ENCODE measurements at regions of chr1 and their contacts with region 1.

Region 1: DNA sequence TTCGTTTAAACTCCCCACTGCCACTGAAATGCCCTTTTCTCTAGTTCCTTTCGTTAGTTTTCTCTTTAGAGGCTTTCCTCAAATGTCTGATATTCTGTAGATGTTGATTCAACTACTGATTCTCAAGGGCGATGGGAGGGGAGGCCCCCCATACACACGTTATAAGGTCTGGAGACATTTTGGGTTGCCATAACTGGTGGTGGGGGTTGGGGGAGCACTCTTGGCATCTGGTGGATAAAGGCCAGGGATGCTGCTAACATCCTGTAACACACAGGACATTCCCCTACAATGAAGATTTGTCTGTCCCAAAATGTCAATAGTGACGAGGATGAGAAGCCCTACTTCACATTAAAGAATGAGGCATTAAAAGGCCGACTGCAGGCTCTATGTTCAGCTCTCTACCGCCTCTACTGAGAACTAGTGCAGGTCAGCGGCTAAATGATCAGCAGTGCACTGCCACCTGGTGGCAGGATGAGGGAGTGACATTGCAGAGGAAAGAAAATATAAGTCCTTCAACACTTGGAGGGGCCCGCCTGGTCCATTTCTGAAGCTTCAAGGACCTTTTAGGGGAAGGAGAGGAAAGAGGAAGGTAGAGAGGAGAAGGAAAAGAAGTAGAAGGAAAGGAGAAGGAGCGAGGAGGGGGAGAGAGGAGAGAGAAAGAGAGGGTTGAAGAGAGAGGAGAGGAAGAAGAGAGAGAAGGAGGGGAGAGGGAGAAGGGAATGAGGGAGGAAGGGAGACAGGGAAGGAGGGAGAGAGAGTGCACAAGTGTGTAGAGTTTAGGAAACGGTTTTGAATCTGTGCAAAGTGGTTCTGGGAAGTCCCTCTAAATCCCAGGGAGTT is 29.4 kb downstream of the ALG14 start:
- DNase-seq: no peak
- H3K4me3 ChIP-seq: no peak overlapping the region
- CTCF ChIP-seq: peak; percentile 95

Region 2: GRCh38 chr1:94541175-94542087 is 501.9 kb before region 1 on chr1 and contains the start of gene F3:
- CTCF ChIA-PET with region 1: no interaction called
- POLR2A ChIA-PET with region 1: no interaction called
- DNase-seq: no peak
- H3K4me3 ChIP-seq: peak within 1 kb of the TSS; percentile 66
- CTCF ChIP-seq: peak; percentile 15

Region 3: DNA sequence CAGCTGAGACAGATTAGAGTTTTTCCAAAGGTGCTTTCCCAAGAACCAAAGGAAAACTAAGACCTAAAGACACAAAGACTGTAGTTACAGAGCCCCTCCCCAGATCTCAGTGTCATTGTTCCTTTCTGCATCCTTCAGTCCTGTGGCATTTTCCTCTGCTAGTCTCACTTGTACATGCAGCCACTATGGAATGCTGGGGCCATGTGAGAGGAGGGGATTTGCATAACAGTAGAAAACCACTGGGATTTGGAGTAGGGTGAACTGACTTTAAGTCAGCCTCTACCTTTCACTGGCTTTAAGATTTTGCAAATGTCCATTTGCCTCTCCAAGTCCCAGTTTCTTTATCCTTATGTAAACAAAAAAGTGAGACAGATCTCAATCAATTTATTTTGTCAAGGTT is 382.4 kb before region 1 on chr1:
- CTCF ChIA-PET with region 1: no interaction called
- POLR2A ChIA-PET with region 1: no interaction called
- DNase-seq: no peak
- H3K4me3 ChIP-seq: no peak overlapping the region
- CTCF ChIP-seq: no peak

Region 4: DNA sequence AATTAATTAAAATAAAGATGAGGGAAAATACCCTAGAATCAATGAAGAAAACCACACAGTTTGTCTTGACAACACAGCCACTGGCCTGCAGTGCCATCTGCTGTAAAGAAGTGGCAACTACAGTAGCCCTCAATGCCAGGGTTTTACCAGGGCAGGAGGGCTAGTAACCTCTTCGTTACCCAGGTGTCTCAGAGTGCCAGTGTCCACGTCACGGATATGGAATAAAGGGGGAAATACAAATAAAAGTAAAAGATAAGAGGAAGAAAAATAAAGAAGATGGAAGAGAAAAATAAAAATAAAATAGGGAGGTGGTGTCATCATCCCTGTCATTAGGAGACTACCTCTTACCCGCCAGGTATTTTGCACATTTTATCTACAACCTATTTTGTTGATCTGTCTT is 237.4 kb before region 1 on chr1:
- CTCF ChIA-PET with region 1: interaction called, 51 read pairs
- POLR2A ChIA-PET with region 1: no interaction called
- DNase-seq: no peak
- H3K4me3 ChIP-seq: peak overlapping the region; percentile 0
- CTCF ChIP-seq: peak; percentile 74

Region 5: GRCh38 chr1:94832446-94832845 is 210.9 kb before region 1 on chr1:
- CTCF ChIA-PET with region 1: interaction called, 13 read pairs
- POLR2A ChIA-PET with region 1: no interaction called
- DNase-seq: no peak
- H3K4me3 ChIP-seq: no peak overlapping the region
- CTCF ChIP-seq: no peak

Region 6: GRCh38 chr1:94873522-94874351 is 169.6 kb before region 1 on chr1:
- CTCF ChIA-PET with region 1: interaction called, 17 read pairs
- POLR2A ChIA-PET with region 1: no interaction called
- DNase-seq: no peak
- H3K4me3 ChIP-seq: no peak overlapping the region
- CTCF ChIP-seq: no peak

Region 7: GRCh38 chr1:94909486-94909885 is 133.9 kb before region 1 on chr1:
- CTCF ChIA-PET with region 1: interaction called, 30 read pairs
- POLR2A ChIA-PET with region 1: no interaction called
- DNase-seq: no peak
- H3K4me3 ChIP-seq: no peak overlapping the region
- CTCF ChIP-seq: no peak

Region 8: GRCh38 chr1:94962409-94963265 is 80.7 kb before region 1 on chr1:
- CTCF ChIA-PET with region 1: interaction called, 10 read pairs
- POLR2A ChIA-PET with region 1: no interaction called
- DNase-seq: no peak
- H3K4me3 ChIP-seq: peak overlapping the region; percentile 23
- CTCF ChIP-seq: no peak